OCI-LY7 (cell line): ENCODE measurements at regions of chr14 and their contacts with region 1.

Region 1: DNA sequence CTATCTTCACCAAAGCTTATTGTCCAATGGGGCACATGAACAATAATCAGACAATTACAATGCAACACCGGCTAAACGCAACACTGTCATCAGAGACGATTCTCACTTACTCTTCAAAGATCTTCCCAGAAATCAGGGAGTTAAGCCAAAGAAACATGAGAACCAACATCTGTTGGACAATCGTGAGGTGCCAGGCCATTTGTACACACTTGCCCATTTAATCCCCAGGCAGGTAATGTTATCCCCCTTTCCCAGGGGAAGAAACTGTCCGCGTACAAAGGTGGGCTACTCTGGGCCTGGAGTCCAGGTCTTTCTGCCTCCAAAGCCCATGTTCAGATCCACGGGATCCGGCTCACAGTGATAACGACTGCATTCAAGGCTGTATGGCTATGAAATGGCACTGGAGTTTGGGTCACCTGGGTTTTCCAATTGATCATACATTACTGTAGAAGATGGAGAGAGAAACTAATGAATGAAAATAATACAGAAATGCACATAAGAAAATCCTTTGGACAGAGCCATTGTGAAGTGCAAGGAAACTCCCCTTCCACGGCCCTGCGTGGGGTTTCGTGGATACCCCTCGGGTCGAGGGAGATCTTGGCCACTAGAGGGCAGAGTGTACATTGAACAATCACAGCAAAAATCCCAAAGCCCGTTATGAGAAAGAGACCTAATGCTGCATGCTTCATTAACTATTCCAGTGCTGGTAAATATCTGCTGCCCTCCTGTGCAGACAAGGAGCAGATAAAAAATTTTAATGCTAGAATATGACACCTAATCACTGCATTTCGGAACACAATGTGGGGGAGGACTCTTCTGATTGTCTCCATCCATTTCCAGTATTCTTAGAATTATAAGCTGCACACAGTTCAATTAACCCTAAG is 111.4 kb downstream of the EGLN3 start:
- DNase-seq: peak; percentile 58
- H3K4me3 ChIP-seq: no peak overlapping the region
- H3K27ac ChIP-seq: no peak overlapping the region
- H3K4me1 ChIP-seq: no peaks in the 10 kb centered on the region
- CTCF ChIP-seq: peak; percentile 89

Region 2: DNA sequence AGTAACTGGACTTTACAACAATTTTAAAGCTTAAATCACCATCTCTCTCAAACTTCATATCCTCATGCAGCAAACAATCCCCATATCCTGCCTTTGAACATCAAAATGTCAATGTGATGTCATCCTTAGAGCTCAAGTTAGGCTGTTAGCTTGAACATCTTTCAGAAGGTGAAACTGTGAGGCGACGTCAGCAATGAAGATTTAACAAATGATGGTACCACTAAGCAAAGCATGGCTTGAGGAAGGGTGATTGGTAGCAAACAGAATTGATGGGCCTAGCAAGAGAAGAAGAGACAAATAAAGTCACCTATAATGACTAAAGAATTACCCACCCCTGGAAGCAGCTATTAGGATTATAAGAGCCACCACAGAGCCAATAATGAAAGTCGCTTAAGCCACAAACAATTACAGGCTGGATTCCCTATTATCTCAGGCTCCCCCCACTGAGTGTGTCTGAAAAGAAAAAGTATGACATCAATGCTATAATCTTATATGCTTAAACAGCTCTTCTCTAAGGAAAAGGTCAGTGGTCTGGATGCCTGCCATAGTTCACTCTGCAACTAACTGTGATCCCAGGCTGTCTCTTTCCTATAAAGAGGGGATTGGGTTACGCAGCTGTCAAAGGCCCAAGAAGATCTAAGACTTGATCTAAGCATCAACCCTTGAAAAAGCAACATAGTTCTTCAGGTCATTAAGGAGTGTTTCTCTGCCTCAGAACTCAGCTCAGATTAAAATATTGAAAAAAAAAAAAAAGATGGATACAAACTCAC is 93.3 kb after region 1 on chr14:
- CTCF ChIA-PET with region 1: no interaction called
- POLR2A ChIA-PET with region 1: no interaction called
- intact Hi-C with region 1: no loop called
- DNase-seq: no peak
- H3K4me3 ChIP-seq: no peak overlapping the region
- H3K27ac ChIP-seq: no peak overlapping the region
- H3K4me1 ChIP-seq: no peaks in the 10 kb centered on the region
- CTCF ChIP-seq: no peak

Region 3: GRCh38 chr14:34227834-34228649 is 388.6 kb after region 1 on chr14:
- CTCF ChIA-PET with region 1: no interaction called
- POLR2A ChIA-PET with region 1: no interaction called
- intact Hi-C with region 1: loop called (anchors 10 kb)
- DNase-seq: peak; percentile 4
- H3K4me3 ChIP-seq: no peak overlapping the region
- H3K27ac ChIP-seq: no peak overlapping the region
- H3K4me1 ChIP-seq: no peaks in the 10 kb centered on the region
- CTCF ChIP-seq: peak; percentile 75

Region 4: DNA sequence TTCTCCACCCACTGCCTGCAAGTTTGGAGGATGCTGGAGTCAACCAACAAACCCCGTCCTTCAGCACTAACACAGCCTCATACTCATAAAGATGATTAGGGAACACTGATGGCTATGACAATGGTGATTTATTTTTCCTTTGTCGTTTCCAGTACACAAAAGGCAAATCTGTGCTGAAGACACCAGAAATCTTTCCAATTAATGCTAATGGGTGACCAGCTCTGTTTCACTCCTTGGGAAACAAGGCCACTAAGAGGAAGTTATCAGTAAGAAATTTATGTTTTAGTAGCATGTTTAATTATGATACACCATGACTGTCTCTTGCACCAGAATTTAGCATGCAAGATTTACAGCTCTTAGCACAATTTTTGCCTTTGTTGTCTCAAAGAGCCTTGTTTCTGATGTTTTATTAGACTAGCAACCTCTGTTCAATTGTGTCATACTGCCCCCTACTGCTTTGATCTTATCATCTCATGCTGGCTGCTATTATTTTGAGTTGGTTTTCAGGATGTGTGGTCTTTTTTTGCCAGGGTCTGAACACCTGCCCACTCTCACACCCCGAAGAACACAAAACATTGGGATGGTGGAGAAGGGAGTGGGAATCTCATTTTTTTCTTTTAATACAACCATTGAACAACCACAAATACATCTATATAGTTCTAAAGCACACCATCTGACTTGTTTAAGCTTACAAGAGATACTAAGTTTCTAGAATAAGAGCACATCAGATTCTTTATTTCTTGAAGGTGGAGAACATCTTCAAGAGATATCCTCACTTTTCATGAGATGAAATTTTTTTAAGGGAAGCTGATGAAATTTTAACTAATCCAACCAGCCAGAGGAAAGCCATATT is 461.7 kb after region 1 on chr14:
- CTCF ChIA-PET with region 1: no interaction called
- POLR2A ChIA-PET with region 1: no interaction called
- intact Hi-C with region 1: loop called (anchors 10 kb)
- DNase-seq: peak; percentile 42
- H3K4me3 ChIP-seq: no peak overlapping the region
- H3K27ac ChIP-seq: no peak overlapping the region
- H3K4me1 ChIP-seq: no peaks in the 10 kb centered on the region
- CTCF ChIP-seq: peak; percentile 86

Region 5: DNA sequence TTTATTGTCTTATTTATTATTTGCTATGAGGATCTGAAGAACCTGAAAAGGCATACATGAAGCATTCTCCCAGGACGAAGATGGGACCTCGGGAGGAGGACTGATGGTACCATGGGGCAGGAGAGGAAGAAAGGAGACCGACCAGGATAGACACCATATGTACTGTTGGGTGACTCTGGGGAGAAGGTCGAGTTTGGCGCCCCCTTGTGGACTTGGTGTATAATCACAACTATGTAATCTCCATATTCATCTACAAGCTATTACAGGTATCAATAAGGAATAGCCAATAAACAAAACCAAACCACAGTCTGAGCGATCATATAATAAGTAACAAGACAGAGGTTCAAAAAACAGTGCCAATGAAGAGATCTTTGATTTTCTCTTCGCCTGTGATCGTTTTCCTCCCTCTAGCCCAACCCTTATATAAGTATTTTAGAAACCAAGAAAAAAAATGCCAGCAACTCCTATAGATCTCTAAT is 483.5 kb after region 1 on chr14:
- CTCF ChIA-PET with region 1: no interaction called
- POLR2A ChIA-PET with region 1: no interaction called
- intact Hi-C with region 1: loop called (anchors 10 kb)
- DNase-seq: peak; percentile 69
- H3K4me3 ChIP-seq: no peak overlapping the region
- H3K27ac ChIP-seq: no peak overlapping the region
- H3K4me1 ChIP-seq: no peaks in the 10 kb centered on the region
- CTCF ChIP-seq: peak; percentile 94